ENCODE measurements at regions of chr6 and their contacts with region 1.

Region 1: DNA sequence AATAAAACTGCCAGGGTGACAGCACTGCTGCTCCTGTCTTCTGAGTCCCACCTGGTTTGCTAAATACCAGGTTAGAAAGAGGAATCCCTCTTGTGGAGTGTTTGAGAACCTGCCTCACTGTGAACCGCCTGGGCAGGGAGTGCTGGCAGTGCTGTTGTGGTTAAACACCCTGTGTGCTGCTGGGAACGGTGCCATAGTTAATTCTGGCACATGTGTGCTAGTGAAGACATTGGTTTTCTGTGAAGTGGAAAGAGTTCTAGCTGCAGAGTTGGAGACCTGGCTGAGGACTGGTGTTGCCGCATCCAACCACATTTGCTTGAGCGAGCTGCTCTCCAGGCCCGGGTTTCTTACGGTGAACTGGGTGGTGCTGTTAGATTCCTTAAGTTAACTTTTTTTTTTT is 72.7 kb downstream of the IGF2R start:
- DNase-seq: peak; percentile 75
- ATAC-seq: peak; percentile 48
- H3K4me3 ChIP-seq: peak overlapping the region; percentile 60; the same call in 1 of the 2 replicates
- H3K27ac ChIP-seq: peak overlapping the region; percentile 99
- H3K4me1 ChIP-seq: peaks cover 47% of the 10 kb centered on the region
- H3K27me3 ChIP-seq: no peaks in the 10 kb centered on the region
- CTCF ChIP-seq: peak; percentile 37; the same call in 1 of the 2 replicates

Region 2: GRCh38 chr6:159862103-159862502 is 179.5 kb before region 1 on chr6:
- CTCF ChIA-PET with region 1: interaction called, 3 read pairs
- POLR2A ChIA-PET with region 1: no interaction called
- intact Hi-C with region 1: loop called (anchors 2 kb)
- DNase-seq: no peak
- ATAC-seq: no peak
- H3K4me3 ChIP-seq: no peak overlapping the region
- H3K27ac ChIP-seq: no peak overlapping the region
- H3K4me1 ChIP-seq: no peaks in the 10 kb centered on the region
- H3K27me3 ChIP-seq: no peaks in the 10 kb centered on the region
- CTCF ChIP-seq: no peak

Region 3: DNA sequence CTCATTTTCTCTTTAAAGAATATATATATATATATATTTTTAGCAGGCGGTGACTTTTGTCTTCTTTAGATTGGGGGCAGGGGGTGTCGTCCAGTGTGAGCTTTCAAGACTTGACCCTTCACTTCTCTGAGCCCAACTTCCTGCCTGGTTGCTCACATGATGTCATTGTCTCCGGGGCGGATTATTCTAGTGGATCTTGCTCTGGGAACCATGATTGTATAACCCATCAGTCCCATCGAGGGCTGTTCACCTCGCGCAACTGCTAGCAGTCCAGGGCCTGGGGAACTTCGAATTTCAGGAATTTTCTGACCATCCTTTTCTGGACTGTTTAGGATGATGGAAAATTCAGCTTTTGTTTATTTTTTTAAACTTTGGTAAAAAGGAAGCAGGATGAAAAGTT is 71.7 kb before region 1 on chr6:
- CTCF ChIA-PET with region 1: no interaction called
- POLR2A ChIA-PET with region 1: no interaction called
- intact Hi-C with region 1: loop called (anchors 5 kb)
- DNase-seq: peak; percentile 54
- ATAC-seq: peak; percentile 42
- H3K4me3 ChIP-seq: peak overlapping the region; percentile 82
- H3K27ac ChIP-seq: peak overlapping the region; percentile 61; the same call in 1 of the 2 replicates
- H3K4me1 ChIP-seq: peaks cover 45% of the 10 kb centered on the region
- H3K27me3 ChIP-seq: no peaks in the 10 kb centered on the region
- CTCF ChIP-seq: no peak

Region 4: GRCh38 chr6:160028487-160029275 is 12.9 kb before region 1 on chr6:
- CTCF ChIA-PET with region 1: interaction called, 10 read pairs
- POLR2A ChIA-PET with region 1: no interaction called
- intact Hi-C with region 1: no loop called
- DNase-seq: no peak
- ATAC-seq: no peak
- H3K4me3 ChIP-seq: no peak overlapping the region
- H3K27ac ChIP-seq: peak overlapping the region; percentile 78
- H3K4me1 ChIP-seq: peaks cover 24% of the 10 kb centered on the region
- H3K27me3 ChIP-seq: no peaks in the 10 kb centered on the region
- CTCF ChIP-seq: no peak

Region 5: DNA sequence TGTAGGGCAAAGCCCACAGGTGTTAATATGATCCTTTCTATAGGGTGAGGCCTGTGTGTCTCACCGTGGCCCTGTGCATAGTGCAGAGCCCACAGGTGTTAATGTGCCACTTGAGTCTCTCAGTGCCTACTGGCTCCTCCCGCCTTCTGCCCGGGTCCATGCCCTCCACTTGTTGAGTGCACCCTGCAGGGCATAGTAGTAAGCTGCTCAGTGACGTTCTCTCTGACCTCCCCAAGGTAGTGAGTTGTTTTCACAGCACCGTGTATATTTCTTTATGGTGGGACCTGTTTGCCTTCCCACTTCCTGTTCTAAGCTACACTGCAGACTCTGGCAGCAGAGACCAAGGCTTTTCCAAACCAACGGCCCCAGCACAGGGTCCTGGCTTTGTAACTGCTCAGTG is 15.5 kb after region 1 on chr6:
- CTCF ChIA-PET with region 1: no interaction called
- POLR2A ChIA-PET with region 1: no interaction called
- intact Hi-C with region 1: no loop called
- DNase-seq: no peak
- ATAC-seq: no peak
- H3K4me3 ChIP-seq: no peak overlapping the region
- H3K27ac ChIP-seq: no peak overlapping the region
- H3K4me1 ChIP-seq: no peaks in the 10 kb centered on the region
- H3K27me3 ChIP-seq: no peaks in the 10 kb centered on the region
- CTCF ChIP-seq: no peak